Naive thymus-derived CD4-positive, alpha-beta T cell (primary cell): ENCODE measurements at regions of chr16 and their contacts with region 1.

Region 1: GRCh38 chr16:60363566-60363965 is 1629.5 kb upstream of the GOT2 start:
- DNase-seq: no peak
- ATAC-seq: no peak
- H3K4me3 ChIP-seq: no peak overlapping the region
- H3K4me3 Mint-ChIP-seq: no peak overlapping the region
- H3K27ac ChIP-seq: no peak overlapping the region
- H3K27ac Mint-ChIP-seq: no peak overlapping the region
- H3K4me1 ChIP-seq: no peaks in the 10 kb centered on the region
- H3K4me1 Mint-ChIP-seq: no peaks in the 10 kb centered on the region
- H3K27me3 ChIP-seq: no peaks in the 10 kb centered on the region
- H3K27me3 Mint-ChIP-seq: no peaks in the 10 kb centered on the region

Region 2: GRCh38 chr16:60882801-60883200 is 519.2 kb after region 1 on chr16:
- CTCF ChIA-PET with region 1: no interaction called
- POLR2A ChIA-PET with region 1: no interaction called
- intact Hi-C with region 1: loop called in 1 of 2 experiments (anchors 5 kb)
- DNase-seq: no peak
- ATAC-seq: no peak
- H3K4me3 ChIP-seq: no peak overlapping the region
- H3K4me3 Mint-ChIP-seq: no peak overlapping the region
- H3K27ac ChIP-seq: no peak overlapping the region
- H3K27ac Mint-ChIP-seq: no peak overlapping the region
- H3K4me1 ChIP-seq: no peaks in the 10 kb centered on the region
- H3K4me1 Mint-ChIP-seq: no peaks in the 10 kb centered on the region
- H3K27me3 ChIP-seq: no peaks in the 10 kb centered on the region
- H3K27me3 Mint-ChIP-seq: no peaks in the 10 kb centered on the region